Motor neuron (in vitro differentiated cells): ENCODE measurements at regions of chr6 and their contacts with region 1.

Region 1: GRCh38 chr6:144582939-144583613 is 297.9 kb downstream of the UTRN start:
- ATAC-seq: peak; percentile 42 to 88 (median 82)
- H3K4me3 ChIP-seq: peak overlapping the region; percentile 30 to 43 (median 39)
- H3K27ac ChIP-seq: peak overlapping the region; percentile 10 to 56
- H3K4me1 ChIP-seq: peaks cover 10 to 42% of the 10 kb centered on the region in 2 donors

Region 2: DNA sequence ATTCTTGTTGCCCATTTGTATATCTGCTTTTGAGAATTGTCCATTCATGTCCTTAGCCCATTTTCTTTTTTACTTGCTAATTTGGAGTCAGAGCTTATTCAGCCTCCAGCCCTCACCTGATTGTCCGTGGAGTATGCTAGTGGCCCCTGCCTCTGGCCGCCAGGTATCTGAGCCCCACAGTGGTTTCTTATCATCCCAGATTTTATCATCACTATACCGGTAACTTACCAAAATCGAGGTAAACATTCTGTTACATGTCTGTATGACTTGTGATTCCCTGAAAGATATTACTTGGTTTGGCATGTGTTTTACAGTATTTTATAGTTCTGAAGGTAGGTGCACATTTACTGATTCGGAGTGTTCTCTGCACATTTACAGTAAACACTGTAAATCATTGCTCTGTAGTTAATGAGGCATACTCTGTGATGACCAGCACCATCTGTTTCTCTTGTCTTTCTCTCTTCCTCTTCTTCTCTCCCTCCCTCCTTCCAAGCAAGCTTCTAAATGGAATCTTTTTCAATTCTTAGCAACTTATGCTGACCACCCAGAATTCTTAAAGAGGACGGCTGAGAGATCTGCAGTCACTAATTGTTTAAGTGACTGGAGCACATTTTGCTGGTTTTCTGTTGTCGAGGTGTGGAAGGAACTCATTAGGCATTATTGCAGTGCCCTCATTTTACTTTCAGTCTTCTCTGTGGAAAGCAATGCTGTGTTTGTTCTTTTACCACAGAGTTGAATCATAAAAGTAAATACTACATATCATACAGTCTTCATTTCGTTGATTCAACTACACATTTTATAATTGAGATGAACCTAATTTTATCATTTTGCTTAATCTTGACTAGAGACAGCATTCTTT is 171.5 kb before region 1 on chr6:
- in situ Hi-C with region 1: no loop called
- ATAC-seq: peak in 4 of 8 experiments; percentile 15 to 59 (median 49)
- H3K4me3 ChIP-seq: no peak overlapping the region
- H3K27ac ChIP-seq: no peak overlapping the region
- H3K4me1 ChIP-seq: peaks cover 5% of the 10 kb centered on the region in 2 donors

Region 3: GRCh38 chr6:144931172-144932035 is 348.3 kb after region 1 on chr6:
- in situ Hi-C with region 1: loop called in 2 of 9 experiments (anchors 25 kb)
- ATAC-seq: peak in 4 of 8 experiments; percentile 32 to 75 (median 64)
- H3K4me3 ChIP-seq: no peak overlapping the region
- H3K27ac ChIP-seq: no peak overlapping the region
- H3K4me1 ChIP-seq: no peaks in the 10 kb centered on the region

Region 4: GRCh38 chr6:145214570-145214969 is 631.5 kb after region 1 on chr6:
- in situ Hi-C with region 1: loop called in 7 of 9 experiments (anchors 25 kb)
- ATAC-seq: no peak
- H3K4me3 ChIP-seq: no peak overlapping the region
- H3K27ac ChIP-seq: no peak overlapping the region
- H3K4me1 ChIP-seq: peaks cover 0 to 6% of the 10 kb centered on the region in 2 donors

Region 5: DNA sequence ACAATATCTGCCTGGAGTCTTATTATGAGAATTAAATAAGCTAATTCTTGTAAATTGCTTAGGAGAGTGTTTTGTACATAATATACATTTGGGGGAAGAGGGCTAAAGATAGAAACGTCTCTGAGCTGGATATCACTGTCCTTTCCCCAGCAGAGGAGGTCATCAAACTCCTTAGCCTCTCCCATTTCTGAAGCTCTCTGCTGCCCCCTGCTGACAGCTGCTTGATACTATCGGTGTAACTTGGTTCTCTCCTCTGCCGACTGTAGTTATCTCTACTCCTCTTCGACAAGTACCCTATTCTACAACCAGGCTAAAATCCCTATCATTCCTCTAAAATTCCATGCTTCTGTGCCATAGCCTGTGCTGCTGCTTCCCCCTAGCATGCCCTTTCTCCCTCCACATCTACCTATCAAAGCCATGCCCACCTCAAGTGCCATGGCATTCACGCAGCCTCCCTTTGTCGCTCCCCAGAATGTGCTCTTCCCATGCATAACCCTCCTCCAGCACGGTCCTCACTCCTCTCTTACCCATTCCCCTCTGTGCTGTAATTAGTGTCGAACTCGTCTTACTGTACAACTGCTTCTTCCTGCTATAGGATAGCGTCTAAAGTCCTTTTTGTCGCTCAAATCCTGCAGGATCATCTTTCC is 1051.0 kb after region 1 on chr6:
- in situ Hi-C with region 1: loop called in 2 of 9 experiments (anchors 25 kb)
- ATAC-seq: peak; percentile 89 to 98 (median 94)
- H3K4me3 ChIP-seq: no peak overlapping the region
- H3K27ac ChIP-seq: no peak overlapping the region
- H3K4me1 ChIP-seq: peaks cover 0 to 10% of the 10 kb centered on the region in 2 donors